ENCODE measurements at regions of chr5 and their contacts with region 1.

Region 1: DNA sequence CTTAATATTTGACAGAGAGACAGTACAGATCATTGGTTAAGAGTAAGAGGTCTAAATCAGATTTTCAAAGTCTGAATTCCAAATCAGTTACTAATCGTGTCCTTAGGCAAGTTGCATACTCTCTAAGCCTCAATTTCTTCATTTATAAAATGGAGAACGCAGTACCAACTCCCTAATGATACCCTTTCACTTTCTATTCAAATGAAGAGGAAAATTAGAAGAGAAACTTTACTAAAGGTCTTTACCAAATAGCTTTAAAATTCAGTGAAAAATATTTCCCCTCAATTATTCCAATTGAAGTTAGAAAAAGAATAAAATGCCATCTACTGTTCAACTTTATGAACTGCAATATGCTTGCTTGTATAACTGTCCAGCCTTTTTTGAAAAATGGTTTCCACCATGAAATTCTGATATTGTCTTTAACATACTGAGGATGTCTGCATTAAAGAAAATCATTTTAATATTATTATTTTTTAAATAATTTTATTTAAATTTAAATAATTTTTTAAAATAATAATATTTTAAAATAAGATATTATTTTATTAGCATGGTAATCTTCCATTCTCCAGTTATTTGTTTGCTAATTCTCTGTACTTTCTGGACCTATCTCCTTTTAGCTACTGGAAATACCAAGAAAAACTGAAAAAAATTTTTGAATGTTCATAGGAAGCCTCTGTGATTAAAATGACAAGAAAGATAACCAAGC is 36.0 kb downstream of the POC5 start:
- DNase-seq: no peak
- H3K4me3 ChIP-seq: no peak overlapping the region
- H3K27ac ChIP-seq: no peak overlapping the region
- H3K4me1 ChIP-seq: no peaks in the 10 kb centered on the region
- H3K27me3 ChIP-seq: no peaks in the 10 kb centered on the region
- CTCF ChIP-seq: peak; percentile 84

Region 2: GRCh38 chr5:75236322-75237316 is 444.7 kb before region 1 on chr5 and contains the start of gene ANKRD31:
- intact Hi-C with region 1: loop called (anchors 10 kb)
- DNase-seq: peak; percentile 89
- H3K4me3 ChIP-seq: peak within 1 kb of the TSS; percentile 84
- H3K27ac ChIP-seq: peak within 1 kb of the TSS; percentile 75
- H3K4me1 ChIP-seq: peaks cover 14% of the 10 kb centered on the region
- H3K27me3 ChIP-seq: peaks cover 8% of the 10 kb centered on the region
- CTCF ChIP-seq: peak; percentile 94
- total RNA-seq, gene ANKRD31: 0.11 TPM

Region 3: DNA sequence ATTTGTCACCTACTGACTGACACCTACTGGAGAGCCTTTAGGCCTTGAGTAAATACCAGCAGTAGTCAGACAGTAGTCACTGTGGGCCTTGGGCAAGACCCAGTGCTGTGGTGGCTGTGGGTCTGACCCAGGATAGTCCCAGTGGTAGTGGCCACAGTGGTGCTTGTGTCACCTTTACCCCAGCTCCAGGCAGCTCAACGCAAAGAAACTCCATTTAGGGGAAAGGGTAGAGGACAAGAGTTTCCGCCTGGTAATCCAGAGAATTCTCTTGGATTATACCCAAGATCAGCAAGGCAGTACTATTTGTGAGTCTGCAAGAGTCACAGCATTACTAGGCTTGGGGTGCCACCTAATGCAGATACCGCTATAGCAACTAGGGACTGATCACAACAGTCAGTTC is 198.8 kb before region 1 on chr5:
- intact Hi-C with region 1: no loop called
- DNase-seq: no peak
- H3K4me3 ChIP-seq: no peak overlapping the region
- H3K27ac ChIP-seq: no peak overlapping the region
- H3K4me1 ChIP-seq: peaks cover 22% of the 10 kb centered on the region
- H3K27me3 ChIP-seq: no peaks in the 10 kb centered on the region
- CTCF ChIP-seq: no peak

Region 4: DNA sequence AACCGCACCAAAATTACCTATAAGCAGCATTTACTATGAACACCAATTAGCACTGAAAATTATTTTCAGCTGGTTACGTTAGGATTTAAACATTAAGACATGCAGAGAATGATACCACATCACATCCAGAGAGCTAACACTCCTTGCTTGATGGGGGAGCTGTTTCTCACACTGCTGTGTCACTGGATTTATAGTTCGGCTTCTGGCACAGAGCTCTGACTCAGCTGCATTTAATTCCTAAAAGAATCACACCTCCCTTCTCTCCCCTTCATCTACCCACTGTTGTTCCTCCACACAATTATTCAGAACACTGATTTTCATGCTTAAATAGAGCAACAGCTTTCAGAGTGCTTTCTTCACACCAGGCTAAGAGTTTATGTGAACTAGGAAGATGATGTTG is 319.3 kb after region 1 on chr5:
- intact Hi-C with region 1: no loop called
- DNase-seq: no peak
- H3K4me3 ChIP-seq: no peak overlapping the region
- H3K27ac ChIP-seq: no peak overlapping the region
- H3K4me1 ChIP-seq: no peaks in the 10 kb centered on the region
- H3K27me3 ChIP-seq: no peaks in the 10 kb centered on the region
- CTCF ChIP-seq: no peak

Measured in left ventricle myocardium inferior (tissue), 1 donor.